MCF 10A (cell line): ENCODE measurements at regions of chr4 and their contacts with region 1.

Region 1: GRCh38 chr4:41661442-41662076 is 87.0 kb downstream of the PHOX2B start:
- DNase-seq: peak; percentile 70
- H3K4me3 Mint-ChIP-seq: no peak overlapping the region
- H3K27ac Mint-ChIP-seq: peak overlapping the region; percentile 32
- H3K4me1 Mint-ChIP-seq: no peaks in the 10 kb centered on the region
- H3K27me3 Mint-ChIP-seq: no peaks in the 10 kb centered on the region
- CTCF ChIP-seq: peak; percentile 89

Region 2: DNA sequence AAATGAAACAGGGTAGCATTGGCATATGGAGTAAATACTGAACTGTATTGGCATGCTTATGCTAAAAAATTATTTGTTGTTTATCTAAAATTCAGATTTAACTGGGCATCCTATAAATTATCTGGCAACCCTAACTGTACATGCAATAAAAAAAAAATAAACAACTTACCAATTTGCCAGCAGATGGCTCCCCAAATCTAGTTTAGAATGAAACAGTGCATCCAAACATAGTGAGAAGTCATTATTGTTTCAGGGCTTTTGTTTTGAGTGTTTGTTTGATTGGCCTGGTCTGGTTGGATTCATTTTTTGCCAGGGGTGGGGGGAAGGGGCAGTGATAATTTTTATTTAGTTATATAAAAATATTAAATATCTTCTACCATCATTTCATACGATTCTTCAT is 924.6 kb before region 1 on chr4:
- CTCF ChIA-PET with region 1: interaction called, 8 read pairs
- POLR2A ChIA-PET with region 1: no interaction called
- intact Hi-C with region 1: loop called (anchors 1 kb)
- DNase-seq: peak; percentile 52
- H3K4me3 Mint-ChIP-seq: no peak overlapping the region
- H3K27ac Mint-ChIP-seq: no peak overlapping the region
- H3K4me1 Mint-ChIP-seq: peaks cover 6% of the 10 kb centered on the region
- H3K27me3 Mint-ChIP-seq: no peaks in the 10 kb centered on the region
- CTCF ChIP-seq: peak; percentile 39

Region 3: DNA sequence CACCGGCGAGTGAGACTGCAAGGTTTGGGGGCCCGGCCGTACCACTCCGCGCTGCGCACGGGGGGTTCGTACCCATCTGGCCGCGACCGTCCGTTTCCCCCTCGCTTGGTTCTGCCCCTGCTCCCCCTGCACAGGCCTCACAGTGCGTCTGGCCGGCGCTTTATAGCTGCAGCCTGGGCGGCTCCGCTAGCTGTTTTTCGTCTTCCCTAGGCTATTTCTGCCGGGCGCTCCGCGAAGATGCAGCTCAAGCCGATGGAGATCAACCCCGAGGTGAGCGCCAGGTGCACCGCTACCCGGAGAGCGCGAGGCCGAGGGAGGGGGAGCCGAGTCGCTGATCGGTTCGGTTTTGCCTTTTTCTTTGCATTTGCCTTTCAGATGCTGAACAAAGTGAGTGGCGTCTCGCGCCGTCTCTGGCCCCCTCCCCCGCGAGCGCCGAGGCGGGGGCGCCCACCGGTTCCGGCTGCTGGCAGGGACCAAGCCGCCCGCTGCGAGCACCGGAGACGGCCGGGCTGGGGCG is 404.8 kb before region 1 on chr4 and contains the start of gene UCHL1:
- CTCF ChIA-PET with region 1: interaction called, 6 read pairs
- POLR2A ChIA-PET with region 1: no interaction called
- intact Hi-C with region 1: loop called (anchors 1 kb)
- DNase-seq: no peak
- H3K4me3 Mint-ChIP-seq: peak within 1 kb of the TSS; percentile 61
- H3K27ac Mint-ChIP-seq: no peak within 1 kb of the TSS
- H3K4me1 Mint-ChIP-seq: peaks cover 6% of the 10 kb centered on the region
- H3K27me3 Mint-ChIP-seq: peaks cover 12% of the 10 kb centered on the region
- CTCF ChIP-seq: no peak
- total RNA-seq, gene UCHL1: 1.3 and 1.4 TPM in 2 replicates

Region 4: GRCh38 chr4:41360214-41360920 is 301.2 kb before region 1 on chr4:
- CTCF ChIA-PET with region 1: interaction called, 4 read pairs
- POLR2A ChIA-PET with region 1: no interaction called
- intact Hi-C with region 1: loop called (anchors 5 kb)
- DNase-seq: peak; percentile 75
- H3K4me3 Mint-ChIP-seq: peak overlapping the region; percentile 89
- H3K27ac Mint-ChIP-seq: no peak overlapping the region
- H3K4me1 Mint-ChIP-seq: peaks cover 30% of the 10 kb centered on the region
- H3K27me3 Mint-ChIP-seq: no peaks in the 10 kb centered on the region
- CTCF ChIP-seq: no peak

Region 5: DNA sequence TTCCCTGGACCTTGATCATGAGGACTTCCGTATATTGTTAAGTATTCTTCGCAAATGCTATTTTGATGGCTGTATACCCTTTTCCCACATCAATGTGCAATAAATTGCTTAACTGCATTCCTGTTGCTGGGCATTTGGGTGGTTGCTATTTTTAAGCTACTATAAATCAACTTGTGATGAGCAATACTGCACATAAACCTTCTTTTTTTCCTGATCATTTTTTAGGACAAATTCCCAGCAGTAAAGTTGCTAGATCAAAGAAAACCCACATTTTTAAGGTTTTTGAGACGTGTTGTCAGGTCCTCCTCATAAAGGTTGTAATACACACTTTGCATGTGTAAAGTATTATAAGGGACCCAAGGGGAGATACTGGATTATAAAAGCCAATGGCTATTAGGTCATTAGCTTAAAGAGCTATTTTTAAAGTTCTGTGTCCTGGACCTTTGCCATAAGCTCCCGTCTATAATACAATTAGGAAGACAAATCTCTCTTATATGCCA is 88.0 kb before region 1 on chr4:
- CTCF ChIA-PET with region 1: interaction called, 5 read pairs
- POLR2A ChIA-PET with region 1: no interaction called
- intact Hi-C with region 1: loop called (anchors 1 kb)
- DNase-seq: peak; percentile 73
- H3K4me3 Mint-ChIP-seq: peak overlapping the region; percentile 9
- H3K27ac Mint-ChIP-seq: peak overlapping the region; percentile 96
- H3K4me1 Mint-ChIP-seq: peaks cover 45% of the 10 kb centered on the region
- H3K27me3 Mint-ChIP-seq: no peaks in the 10 kb centered on the region
- CTCF ChIP-seq: no peak

Region 6: DNA sequence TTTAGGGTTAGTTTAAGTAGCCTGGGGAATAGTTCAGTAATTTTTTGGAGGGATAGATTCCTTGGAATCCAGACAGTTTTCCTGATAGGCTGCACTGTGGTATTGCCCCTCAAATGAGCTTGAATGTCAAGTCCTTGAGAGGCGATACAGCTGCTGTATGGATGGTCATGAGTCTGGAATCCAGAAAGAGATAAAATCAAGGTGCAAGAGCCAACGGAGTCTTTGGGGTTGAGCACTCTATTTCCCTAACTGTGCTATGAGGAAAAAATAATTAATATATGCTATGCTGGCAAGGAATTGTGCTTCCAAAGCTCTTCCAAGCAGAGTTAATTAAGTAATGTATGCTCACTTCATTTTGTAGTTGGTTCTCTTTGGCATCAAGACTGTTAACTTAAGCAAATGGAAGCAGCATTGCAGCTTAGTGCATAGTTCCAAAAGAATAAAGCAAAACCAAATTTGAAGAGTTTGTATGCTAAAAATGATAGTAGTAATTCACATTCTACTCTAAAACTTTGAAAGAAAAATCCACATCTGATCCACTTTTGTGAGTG is 74.8 kb before region 1 on chr4:
- CTCF ChIA-PET with region 1: no interaction called
- POLR2A ChIA-PET with region 1: no interaction called
- intact Hi-C with region 1: no loop called
- DNase-seq: no peak
- H3K4me3 Mint-ChIP-seq: no peak overlapping the region
- H3K27ac Mint-ChIP-seq: no peak overlapping the region
- H3K4me1 Mint-ChIP-seq: peaks cover 13% of the 10 kb centered on the region
- H3K27me3 Mint-ChIP-seq: no peaks in the 10 kb centered on the region
- CTCF ChIP-seq: no peak

Region 7: DNA sequence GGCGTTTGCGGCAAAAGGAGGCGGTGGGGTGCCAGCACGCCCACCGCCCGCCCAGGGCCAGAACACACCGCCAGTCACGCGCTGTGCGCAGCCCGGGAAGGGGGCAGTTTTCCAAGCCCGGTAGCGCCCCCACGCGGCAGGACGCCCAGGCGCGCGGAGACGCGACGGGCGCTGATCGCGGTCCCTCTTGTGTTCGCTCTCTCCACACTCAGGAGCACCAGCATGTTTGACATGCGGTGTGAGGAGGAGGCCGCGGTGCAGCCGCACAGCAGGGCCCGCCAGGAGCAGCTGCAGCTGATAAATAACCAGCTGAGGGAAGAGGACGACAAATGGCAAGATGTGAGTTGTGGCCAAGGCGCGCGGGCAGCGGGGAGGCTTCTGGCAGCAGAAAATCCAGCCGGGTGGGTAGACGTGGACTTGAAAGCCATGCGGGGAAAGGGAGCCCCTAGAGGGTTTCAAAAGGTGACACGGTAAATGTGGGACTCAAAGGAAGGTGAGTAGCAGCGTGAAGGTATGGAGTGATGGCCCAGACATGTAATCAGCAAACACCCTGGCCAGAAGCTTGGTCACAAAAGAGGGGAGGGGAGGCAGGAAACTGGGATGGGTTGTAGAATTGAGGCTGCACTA is 17.2 kb before region 1 on chr4:
- CTCF ChIA-PET with region 1: interaction called, 10 read pairs
- POLR2A ChIA-PET with region 1: interaction called, 3 read pairs
- intact Hi-C with region 1: no loop called
- DNase-seq: no peak
- H3K4me3 Mint-ChIP-seq: no peak overlapping the region
- H3K27ac Mint-ChIP-seq: no peak overlapping the region
- H3K4me1 Mint-ChIP-seq: no peaks in the 10 kb centered on the region
- H3K27me3 Mint-ChIP-seq: no peaks in the 10 kb centered on the region
- CTCF ChIP-seq: peak; percentile 22